Activated CD4-positive, alpha-beta T cell treated with anti-CD3 and anti-CD28 coated beads, Interleukin-2, amount 10 ng/mL, durations not matched to agents 24 days and 14 days (primary cell): ENCODE measurements at regions of chr17 and their contacts with region 1.

Region 1: GRCh38 chr17:66633317-66633965 is 201.5 kb upstream of the CACNG5 start:
- DNase-seq: peak; percentile 87
- H3K4me3 Mint-ChIP-seq: peak overlapping the region; percentile 39
- H3K27ac Mint-ChIP-seq: peak overlapping the region; percentile 86
- H3K4me1 Mint-ChIP-seq: peaks cover 52% of the 10 kb centered on the region
- H3K27me3 Mint-ChIP-seq: no peaks in the 10 kb centered on the region

Region 2: DNA sequence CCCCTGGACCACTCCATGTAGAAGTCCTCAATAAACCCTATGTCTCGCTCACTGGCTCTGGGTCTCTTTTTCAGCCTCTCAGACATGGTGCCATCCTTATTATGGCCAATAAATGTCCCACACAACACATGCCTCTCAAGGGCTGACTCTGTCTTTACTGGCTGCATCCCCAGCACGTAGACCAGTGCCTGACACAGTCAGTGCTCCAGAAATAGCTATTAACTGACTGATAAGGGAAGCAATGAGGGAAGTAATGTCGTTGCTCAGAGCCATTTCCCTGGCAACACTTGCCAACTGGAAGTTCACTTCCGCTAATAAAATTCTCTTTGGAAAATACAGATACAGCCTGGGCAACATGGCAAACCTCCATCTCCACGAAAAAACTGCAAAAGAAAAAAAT is 385.2 kb before region 1 on chr17:
- intact Hi-C with region 1: loop called (anchors 2 kb)
- DNase-seq: no peak
- H3K4me3 Mint-ChIP-seq: no peak overlapping the region
- H3K27ac Mint-ChIP-seq: no peak overlapping the region
- H3K4me1 Mint-ChIP-seq: peaks cover 14% of the 10 kb centered on the region
- H3K27me3 Mint-ChIP-seq: no peaks in the 10 kb centered on the region

Region 3: DNA sequence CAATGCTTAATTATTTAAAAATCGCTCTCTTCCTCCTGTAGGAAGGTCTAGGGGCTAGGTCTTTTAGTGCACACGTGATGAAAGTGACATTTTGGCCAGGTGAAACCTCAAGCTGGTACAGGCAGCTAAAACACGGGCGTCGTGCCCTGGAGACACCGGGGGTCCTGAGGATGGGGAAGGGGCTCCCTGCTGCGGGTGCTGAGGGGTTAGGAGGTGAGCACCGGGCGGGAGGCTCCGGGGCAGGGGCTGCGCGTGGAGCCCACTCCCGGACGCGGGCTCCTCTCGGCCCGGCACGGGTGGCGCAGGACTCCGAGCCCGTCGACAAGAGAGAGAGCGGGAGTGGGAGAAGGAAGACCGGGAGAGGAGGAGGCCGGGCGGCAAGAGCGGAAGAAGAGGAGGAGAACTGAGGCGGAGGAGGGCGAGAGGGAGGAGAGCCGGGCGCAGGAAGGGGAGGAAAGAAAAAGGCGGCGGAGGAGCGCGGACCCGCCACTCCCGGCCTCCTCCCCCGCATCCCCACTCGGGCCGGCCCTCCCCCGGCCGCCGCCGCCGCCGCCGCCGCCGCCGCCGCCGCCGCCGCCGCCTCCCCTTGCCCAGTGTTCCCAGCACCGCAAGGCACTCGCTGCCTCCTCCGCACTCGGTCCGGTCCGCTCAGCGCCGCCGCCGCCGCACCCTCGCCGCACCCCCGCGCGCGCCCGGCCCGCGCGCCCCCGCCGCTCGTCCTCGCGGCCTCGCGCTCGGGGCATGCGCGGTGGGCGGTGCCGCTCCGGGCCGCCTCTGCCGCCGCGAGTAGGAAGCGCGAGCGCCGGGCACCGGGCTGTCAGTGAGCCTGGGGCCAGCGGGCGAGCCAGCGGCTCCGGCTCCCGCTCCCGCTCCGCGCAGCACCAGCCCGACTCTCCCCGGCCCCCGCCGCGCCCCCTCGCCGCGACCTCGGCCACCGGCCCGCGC is 331.4 kb before region 1 on chr17 and contains the start of gene PRKCA:
- intact Hi-C with region 1: loop called (anchors 5 kb)
- DNase-seq: peak; percentile 94
- H3K4me3 Mint-ChIP-seq: peak within 1 kb of the TSS; percentile 96
- H3K27ac Mint-ChIP-seq: peak within 1 kb of the TSS; percentile 98
- H3K4me1 Mint-ChIP-seq: peaks cover 43% of the 10 kb centered on the region
- H3K27me3 Mint-ChIP-seq: no peaks in the 10 kb centered on the region
- total RNA-seq, gene PRKCA: 164 TPM in 2 replicates

Region 4: DNA sequence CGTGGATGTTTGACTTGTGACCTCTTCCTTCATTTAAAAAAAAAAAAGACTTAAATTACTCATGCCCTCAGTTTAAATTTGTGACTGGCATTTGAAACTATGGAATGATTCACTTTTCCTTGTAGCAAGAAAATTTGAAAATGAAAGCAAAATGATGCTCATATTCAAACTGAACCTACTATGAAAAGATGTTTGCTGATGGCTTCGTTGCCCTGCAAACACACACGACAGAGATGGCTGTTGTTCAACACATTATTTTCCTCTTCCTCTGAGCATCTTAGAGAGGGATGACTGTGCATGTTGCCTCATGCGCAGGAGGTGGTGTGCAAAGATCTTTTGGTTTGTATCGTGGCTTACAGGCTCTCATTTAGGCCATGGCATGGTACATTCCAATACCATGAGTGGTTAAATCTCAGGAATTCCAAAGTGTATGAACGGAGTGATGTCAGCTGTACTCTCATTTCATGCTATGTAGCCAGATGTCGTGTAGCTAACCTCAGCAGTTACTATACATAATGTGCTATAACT is 166.5 kb before region 1 on chr17:
- intact Hi-C with region 1: loop called (anchors 1 kb)
- DNase-seq: peak; percentile 85
- H3K4me3 Mint-ChIP-seq: peak overlapping the region; percentile 62
- H3K27ac Mint-ChIP-seq: peak overlapping the region; percentile 93
- H3K4me1 Mint-ChIP-seq: peaks cover 57% of the 10 kb centered on the region
- H3K27me3 Mint-ChIP-seq: no peaks in the 10 kb centered on the region

Region 5: DNA sequence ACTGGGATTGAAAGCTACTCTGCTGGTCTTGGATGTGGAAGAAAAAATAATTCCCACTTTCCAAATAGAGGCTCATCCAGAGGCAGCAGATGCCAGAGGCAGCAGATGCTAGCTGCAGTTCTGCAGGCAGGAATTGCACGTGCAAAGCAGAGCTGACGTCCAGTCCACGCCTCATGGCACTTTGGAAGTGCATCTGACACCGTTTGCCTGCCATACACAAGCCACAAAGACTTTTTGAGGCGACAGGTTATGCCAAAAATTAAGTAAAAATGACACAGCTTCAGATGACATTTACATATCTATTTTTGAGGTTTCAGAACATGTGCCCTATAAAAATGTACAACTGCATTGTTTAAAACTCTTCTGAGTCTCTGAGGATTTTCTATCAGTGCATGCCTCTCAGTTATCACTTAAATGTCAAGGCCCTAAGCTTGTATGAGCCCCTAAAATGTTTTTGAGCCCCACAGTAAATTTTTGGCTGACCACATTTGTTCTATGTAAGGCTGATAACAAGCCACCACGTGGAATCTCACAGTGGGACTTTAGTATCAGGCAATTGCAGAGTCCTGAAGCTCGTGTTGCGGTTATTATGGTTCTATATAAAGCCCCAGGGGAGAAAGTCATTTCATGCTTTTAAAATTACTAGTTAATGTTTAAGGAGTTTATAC is 91.8 kb before region 1 on chr17:
- intact Hi-C with region 1: loop called (anchors 10 kb)
- DNase-seq: no peak
- H3K4me3 Mint-ChIP-seq: no peak overlapping the region
- H3K27ac Mint-ChIP-seq: peak overlapping the region; percentile 72
- H3K4me1 Mint-ChIP-seq: peaks cover 53% of the 10 kb centered on the region
- H3K27me3 Mint-ChIP-seq: no peaks in the 10 kb centered on the region

Region 6: DNA sequence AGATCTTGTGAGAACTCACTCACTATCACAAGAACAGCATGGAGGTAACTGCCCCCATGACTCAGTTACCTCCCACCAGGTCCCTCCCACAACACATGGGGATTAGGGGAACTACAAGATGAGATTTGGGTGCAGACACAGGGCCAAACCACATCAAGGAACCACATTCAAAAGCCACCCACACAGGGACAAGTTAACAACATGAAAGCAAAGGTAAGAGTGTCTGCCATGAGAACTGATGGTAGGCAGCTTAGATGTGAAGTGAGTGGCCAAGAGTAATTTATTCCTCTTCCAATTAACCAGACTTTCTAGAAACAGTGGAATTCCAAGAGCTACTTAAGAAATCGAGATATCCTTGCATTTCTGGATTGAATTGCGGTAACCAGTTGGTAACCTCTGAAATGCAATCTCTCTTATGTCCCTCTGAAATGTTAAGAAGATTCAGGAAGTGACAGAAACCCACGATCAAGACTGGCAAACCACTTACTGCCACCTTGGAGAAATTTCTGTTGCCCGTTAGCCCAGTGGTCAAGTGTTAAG is 34.1 kb after region 1 on chr17:
- intact Hi-C with region 1: loop called (anchors 1 kb)
- DNase-seq: peak; percentile 89
- H3K4me3 Mint-ChIP-seq: peak overlapping the region; percentile 73
- H3K27ac Mint-ChIP-seq: peak overlapping the region; percentile 91
- H3K4me1 Mint-ChIP-seq: peaks cover 71% of the 10 kb centered on the region
- H3K27me3 Mint-ChIP-seq: peaks cover 2% of the 10 kb centered on the region

Region 7: DNA sequence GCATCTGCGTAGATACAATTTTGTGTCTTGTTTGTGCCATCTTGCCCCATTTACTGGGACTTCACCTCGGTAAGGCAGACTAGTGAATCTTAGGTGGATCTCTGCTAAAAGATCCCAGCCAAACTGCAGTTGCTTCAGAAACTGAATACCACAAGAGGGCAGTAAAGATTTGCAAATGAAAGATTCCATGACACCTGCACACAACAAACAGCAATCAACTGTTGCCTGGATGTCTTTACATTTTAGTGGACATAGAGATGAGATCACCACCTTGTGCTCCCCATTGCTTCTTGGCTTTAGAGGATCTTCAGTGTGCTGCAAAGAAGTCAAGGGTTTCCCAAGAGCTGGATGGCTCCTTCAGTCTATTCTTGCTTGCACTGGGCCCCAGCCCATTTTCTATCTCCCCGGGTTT is 82.3 kb after region 1 on chr17:
- intact Hi-C with region 1: no loop called
- DNase-seq: peak; percentile 76
- H3K4me3 Mint-ChIP-seq: no peak overlapping the region
- H3K27ac Mint-ChIP-seq: peak overlapping the region; percentile 17
- H3K4me1 Mint-ChIP-seq: peaks cover 34% of the 10 kb centered on the region
- H3K27me3 Mint-ChIP-seq: no peaks in the 10 kb centered on the region